CD4-positive, alpha-beta T cell (primary cell): ENCODE measurements at regions of chr4 and their contacts with region 1.

Region 1: GRCh38 chr4:89294573-89295269 is 12.9 kb downstream of the GPRIN3 start:
- DNase-seq: peak in 3 of 14 experiments; percentile 79 to 93 (median 85)
- ATAC-seq: peak; percentile 77
- H3K4me3 ChIP-seq: peak overlapping the region; percentile 4
- H3K4me3 Mint-ChIP-seq: peak overlapping the region; percentile 42
- H3K27ac ChIP-seq: peak overlapping the region; percentile 49 to 72
- H3K27ac Mint-ChIP-seq: peak overlapping the region; percentile 90
- H3K4me1 ChIP-seq: peaks cover 50% of the 10 kb centered on the region
- H3K4me1 Mint-ChIP-seq: peaks cover 94% of the 10 kb centered on the region
- H3K27me3 ChIP-seq: no peaks in the 10 kb centered on the region
- H3K27me3 Mint-ChIP-seq: no peaks in the 10 kb centered on the region
- CTCF ChIP-seq: no peak

Region 2: GRCh38 chr4:88880501-88881226 is 414.1 kb before region 1 on chr4:
- CTCF ChIA-PET with region 1: no interaction called
- POLR2A ChIA-PET with region 1: no interaction called
- intact Hi-C with region 1: no loop called
- DNase-seq: no peak
- ATAC-seq: no peak
- H3K4me3 ChIP-seq: no peak overlapping the region
- H3K4me3 Mint-ChIP-seq: no peak overlapping the region
- H3K27ac ChIP-seq: no peak overlapping the region
- H3K27ac Mint-ChIP-seq: no peak overlapping the region
- H3K4me1 ChIP-seq: no peaks in the 10 kb centered on the region
- H3K4me1 Mint-ChIP-seq: no peaks in the 10 kb centered on the region
- H3K27me3 ChIP-seq: no peaks in the 10 kb centered on the region
- H3K27me3 Mint-ChIP-seq: no peaks in the 10 kb centered on the region
- CTCF ChIP-seq: no peak

Region 3: DNA sequence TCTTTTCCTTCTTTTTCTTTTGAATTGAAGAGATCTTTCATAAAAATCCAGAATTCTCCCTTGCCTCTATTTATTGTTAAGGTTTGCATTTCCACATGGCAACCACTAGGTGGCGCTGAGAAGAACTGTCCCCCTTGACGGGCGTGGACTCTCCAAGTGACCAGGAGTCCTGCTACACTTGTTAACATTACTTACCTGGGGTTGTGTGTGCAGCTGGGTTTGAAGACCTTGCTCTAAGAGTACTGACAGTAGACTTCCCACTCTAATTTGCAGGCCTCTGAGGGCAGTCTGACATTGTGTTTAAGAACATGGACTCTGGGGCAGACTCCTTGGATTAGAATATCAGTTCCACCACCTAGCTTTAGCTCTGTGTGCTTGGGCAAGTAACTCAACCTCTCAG is 39.9 kb before region 1 on chr4:
- CTCF ChIA-PET with region 1: interaction called, 29 read pairs
- POLR2A ChIA-PET with region 1: interaction called, 12 read pairs
- intact Hi-C with region 1: loop called (anchors 5 kb)
- DNase-seq: peak in 13 of 14 experiments; percentile 7 to 81 (median 33)
- ATAC-seq: peak; percentile 65
- H3K4me3 ChIP-seq: no peak overlapping the region
- H3K4me3 Mint-ChIP-seq: peak overlapping the region; percentile 1
- H3K27ac ChIP-seq: peak overlapping the region in 1 of 2 donors; percentile 38
- H3K27ac Mint-ChIP-seq: peak overlapping the region; percentile 47
- H3K4me1 ChIP-seq: peaks cover 38% of the 10 kb centered on the region
- H3K4me1 Mint-ChIP-seq: peaks cover 89% of the 10 kb centered on the region
- H3K27me3 ChIP-seq: no peaks in the 10 kb centered on the region
- H3K27me3 Mint-ChIP-seq: no peaks in the 10 kb centered on the region
- CTCF ChIP-seq: peak; percentile 88

Region 4: GRCh38 chr4:89283226-89284009 is 11.3 kb before region 1 on chr4:
- CTCF ChIA-PET with region 1: interaction called, 12 read pairs
- POLR2A ChIA-PET with region 1: interaction called, 48 read pairs
- intact Hi-C with region 1: loop called in 1 of 2 experiments (anchors 2 kb)
- DNase-seq: peak in 10 of 14 experiments; percentile 27 to 94 (median 43)
- ATAC-seq: peak; percentile 82
- H3K4me3 ChIP-seq: peak overlapping the region; percentile 31
- H3K4me3 Mint-ChIP-seq: peak overlapping the region; percentile 62
- H3K27ac ChIP-seq: peak overlapping the region; percentile 39 to 92
- H3K27ac Mint-ChIP-seq: peak overlapping the region; percentile 89
- H3K4me1 ChIP-seq: peaks cover 67% of the 10 kb centered on the region
- H3K4me1 Mint-ChIP-seq: peaks cover 75% of the 10 kb centered on the region
- H3K27me3 ChIP-seq: no peaks in the 10 kb centered on the region
- H3K27me3 Mint-ChIP-seq: no peaks in the 10 kb centered on the region
- CTCF ChIP-seq: no peak

Region 5: DNA sequence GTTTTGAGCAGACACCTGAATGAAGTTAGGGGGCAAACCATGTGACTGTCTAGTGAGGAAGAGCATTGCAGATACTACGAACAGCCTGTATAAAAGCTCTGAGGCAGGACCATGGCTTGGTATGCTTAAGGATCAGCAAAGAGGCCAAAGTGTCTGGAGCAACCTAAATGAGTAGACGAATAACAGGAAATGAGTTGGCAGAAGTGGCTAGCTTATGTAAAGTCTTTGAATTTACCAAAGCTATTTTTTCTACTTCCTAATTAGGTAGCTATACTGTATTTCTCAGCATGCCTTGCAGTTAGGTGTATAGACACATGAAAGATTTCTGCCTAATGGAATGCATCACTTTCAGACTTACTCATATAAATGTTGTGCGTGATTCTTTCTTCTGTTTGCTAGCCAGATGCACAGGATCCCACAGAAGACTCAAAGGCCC is 22.2 kb after region 1 on chr4:
- CTCF ChIA-PET with region 1: interaction called, 10 read pairs
- POLR2A ChIA-PET with region 1: interaction called, 30 read pairs
- intact Hi-C with region 1: loop called in 1 of 2 experiments (anchors 2 kb)
- DNase-seq: peak in 5 of 14 experiments; percentile 27 to 83 (median 69)
- ATAC-seq: peak; percentile 85
- H3K4me3 ChIP-seq: no peak overlapping the region
- H3K4me3 Mint-ChIP-seq: peak overlapping the region; percentile 13
- H3K27ac ChIP-seq: peak overlapping the region; percentile 38 to 68
- H3K27ac Mint-ChIP-seq: peak overlapping the region; percentile 81
- H3K4me1 ChIP-seq: peaks cover 26% of the 10 kb centered on the region
- H3K4me1 Mint-ChIP-seq: peaks cover 38% of the 10 kb centered on the region
- H3K27me3 ChIP-seq: no peaks in the 10 kb centered on the region
- H3K27me3 Mint-ChIP-seq: no peaks in the 10 kb centered on the region
- CTCF ChIP-seq: no peak

Region 6: DNA sequence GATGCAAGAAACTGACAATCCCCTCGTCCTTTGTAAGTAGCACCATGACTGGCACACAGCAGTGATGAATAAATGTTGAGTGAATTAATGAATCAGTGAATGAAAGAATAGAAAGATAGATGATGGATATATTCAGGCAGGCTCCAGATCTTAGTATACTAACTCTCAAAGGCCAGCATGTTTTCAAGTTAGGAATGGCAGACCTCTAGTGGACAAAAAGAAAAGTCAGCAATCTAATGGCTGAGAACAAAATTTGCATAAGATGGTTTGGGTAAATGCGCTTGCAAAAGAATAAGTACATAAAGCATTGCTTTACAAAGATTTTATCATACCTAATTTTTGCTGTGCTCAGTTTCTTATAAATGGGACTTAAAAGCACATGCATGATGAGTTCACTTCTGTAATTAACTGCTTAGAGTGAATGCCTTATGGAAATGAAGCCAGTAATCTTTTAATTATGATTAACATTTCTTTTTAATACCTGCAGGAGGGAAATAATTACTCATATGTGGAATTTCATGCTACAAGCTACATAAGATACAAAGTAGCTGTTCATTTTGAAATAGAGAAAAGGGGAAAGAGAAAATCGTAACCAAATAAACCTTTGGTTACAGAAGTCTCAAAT is 139.8 kb after region 1 on chr4:
- CTCF ChIA-PET with region 1: no interaction called
- POLR2A ChIA-PET with region 1: interaction called, 3 read pairs
- intact Hi-C with region 1: loop called in 1 of 2 experiments (anchors 2 kb)
- DNase-seq: peak in 3 of 14 experiments; percentile 63 to 72 (median 71)
- ATAC-seq: peak; percentile 77
- H3K4me3 ChIP-seq: no peak overlapping the region
- H3K4me3 Mint-ChIP-seq: no peak overlapping the region
- H3K27ac ChIP-seq: no peak overlapping the region
- H3K27ac Mint-ChIP-seq: no peak overlapping the region
- H3K4me1 ChIP-seq: peaks cover 7% of the 10 kb centered on the region
- H3K4me1 Mint-ChIP-seq: peaks cover 12% of the 10 kb centered on the region
- H3K27me3 ChIP-seq: no peaks in the 10 kb centered on the region
- H3K27me3 Mint-ChIP-seq: no peaks in the 10 kb centered on the region
- CTCF ChIP-seq: peak; percentile 90